Left ventricle myocardium inferior (tissue), 1 donor: ENCODE measurements at regions of chr4 and their contacts with region 1.

Region 1: DNA sequence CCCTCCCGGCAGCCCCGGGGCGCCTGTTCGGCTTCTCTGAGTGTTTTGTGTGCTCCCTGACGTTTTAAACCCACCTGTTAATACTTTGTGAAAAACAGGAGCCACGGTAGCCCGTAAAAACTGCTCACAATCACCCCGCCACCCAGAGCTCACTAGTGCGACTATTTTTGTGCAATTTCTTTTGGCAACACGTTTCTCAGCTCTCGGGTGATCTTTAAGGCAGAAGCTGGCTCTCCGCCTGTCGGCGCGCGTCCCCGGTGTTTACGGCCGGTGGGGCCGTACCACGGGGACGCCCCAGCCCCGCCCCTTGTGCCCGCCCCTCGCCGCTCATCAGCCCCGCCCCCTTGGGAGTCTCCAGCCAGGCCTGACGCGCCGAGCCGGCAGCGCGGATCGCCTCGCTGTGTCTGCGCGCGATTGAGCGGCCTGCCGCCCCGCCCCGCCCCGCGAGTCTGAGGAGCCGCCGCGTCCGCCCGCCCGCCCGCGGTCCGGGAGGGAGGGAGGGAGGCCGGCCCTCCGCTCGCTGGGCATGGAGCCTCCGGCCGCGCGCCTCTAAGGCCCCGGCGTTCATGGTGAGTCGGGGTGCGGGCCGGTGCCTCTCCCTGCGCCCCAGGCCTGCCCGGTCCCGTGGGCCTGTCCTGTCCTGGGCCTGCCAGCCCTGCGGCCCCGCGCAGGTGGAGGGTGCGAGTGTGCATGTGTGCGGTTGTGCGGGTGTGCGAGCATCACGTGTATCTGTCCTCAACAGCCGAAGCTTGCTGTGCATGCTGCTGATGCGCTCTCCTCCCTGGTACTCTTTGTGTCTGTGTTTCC is 56.2 kb upstream of the TADA2B start:
- DNase-seq: peak; percentile 95
- H3K4me3 ChIP-seq: peak overlapping the region; percentile 96
- H3K27ac ChIP-seq: peak overlapping the region; percentile 98
- H3K4me1 ChIP-seq: peaks cover 79% of the 10 kb centered on the region
- H3K27me3 ChIP-seq: no peaks in the 10 kb centered on the region
- CTCF ChIP-seq: no peak

Region 2: GRCh38 chr4:6909073-6909965 is 77.7 kb before region 1 on chr4 and contains the start of gene TBC1D14:
- intact Hi-C with region 1: loop called (anchors 10 kb)
- DNase-seq: peak; percentile 89
- H3K4me3 ChIP-seq: peak within 1 kb of the TSS; percentile 72
- H3K27ac ChIP-seq: peak within 1 kb of the TSS; percentile 100
- H3K4me1 ChIP-seq: peaks cover 61% of the 10 kb centered on the region
- H3K27me3 ChIP-seq: peaks cover 15% of the 10 kb centered on the region
- CTCF ChIP-seq: peak; percentile 41
- total RNA-seq, gene TBC1D14: 36.1 TPM